ENCODE measurements at regions of chr6 and their contacts with region 1.

Region 1: GRCh38 chr6:87393022-87393622 is 14.7 kb upstream of the CFAP206 start:
- DNase-seq: peak; percentile 51 to 62 (median 59)
- H3K4me3 ChIP-seq: no peak overlapping the region
- H3K4me3 Mint-ChIP-seq: no peak overlapping the region
- H3K27ac ChIP-seq: no peak overlapping the region
- H3K27ac Mint-ChIP-seq: no peak overlapping the region
- H3K4me1 ChIP-seq: no peaks in the 10 kb centered on the region
- H3K4me1 Mint-ChIP-seq: peaks cover 0 to 2% (median 0%) of the 10 kb centered on the region in 4 donors
- H3K27me3 ChIP-seq: no peaks in the 10 kb centered on the region
- H3K27me3 Mint-ChIP-seq: no peaks in the 10 kb centered on the region

Region 2: GRCh38 chr6:87407901-87408720 is 15.0 kb after region 1 on chr6 and contains the start of gene CFAP206:
- CTCF ChIA-PET with region 1: interaction called, 14 read pairs
- POLR2A ChIA-PET with region 1: no interaction called
- intact Hi-C with region 1: no loop called
- DNase-seq: peak; percentile 79 to 88 (median 85)
- H3K4me3 ChIP-seq: peak within 1 kb of the TSS; percentile 75 to 84
- H3K4me3 Mint-ChIP-seq: peak within 1 kb of the TSS; percentile 88 to 96 (median 89)
- H3K27ac ChIP-seq: peak within 1 kb of the TSS; percentile 67
- H3K27ac Mint-ChIP-seq: peak within 1 kb of the TSS; percentile 83 to 93 (median 89)
- H3K4me1 ChIP-seq: peaks cover 11% of the 10 kb centered on the region
- H3K4me1 Mint-ChIP-seq: peaks cover 4 to 13% (median 5%) of the 10 kb centered on the region in 4 donors
- H3K27me3 ChIP-seq: no peaks in the 10 kb centered on the region
- H3K27me3 Mint-ChIP-seq: peaks cover 4 to 10% of the 10 kb centered on the region in 2 donors
- total RNA-seq, gene CFAP206: 0.25 TPM in 1 of 2 experiments, not detected in the other

Region 3: DNA sequence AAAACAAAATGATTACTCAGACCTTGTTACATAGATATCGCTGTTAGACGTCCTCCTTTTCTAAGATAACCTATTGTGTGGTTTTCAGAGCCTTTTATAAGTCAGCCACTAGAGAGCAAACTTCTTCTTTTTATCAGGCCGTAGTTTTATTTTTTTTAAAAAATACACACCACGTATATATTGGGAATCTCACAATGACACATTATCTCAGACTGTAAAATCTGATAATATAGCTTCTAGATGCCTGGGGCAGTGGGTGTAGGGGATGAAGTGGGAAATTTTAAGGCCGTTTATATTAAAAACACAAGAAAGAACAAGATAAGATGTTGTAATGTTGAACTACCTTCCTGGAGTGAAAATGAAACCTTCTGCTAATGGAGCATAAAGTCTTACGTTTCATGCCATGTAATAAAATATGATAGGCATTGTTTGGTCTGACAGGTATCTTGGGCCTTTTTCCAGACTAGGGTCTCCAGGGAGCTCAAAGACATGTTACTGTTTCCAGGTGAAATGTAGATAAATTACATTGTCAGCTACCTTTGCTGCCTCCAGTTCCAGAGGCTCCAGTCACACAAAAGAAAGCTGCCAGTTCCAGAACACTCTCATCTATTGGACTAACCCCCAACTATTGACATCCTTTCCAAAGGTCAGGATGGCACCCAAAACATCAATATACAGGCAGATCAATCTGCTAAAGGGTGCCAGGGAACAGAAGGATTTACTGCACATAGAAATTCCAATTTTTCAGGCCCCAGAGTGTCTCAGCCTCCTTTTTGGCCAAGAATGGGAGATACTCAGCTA is 439.1 kb after region 1 on chr6:
- CTCF ChIA-PET with region 1: interaction called, 13 read pairs
- POLR2A ChIA-PET with region 1: no interaction called
- intact Hi-C with region 1: no loop called
- DNase-seq: peak in 4 of 5 donors; percentile 37 to 51 (median 44)
- H3K4me3 ChIP-seq: peak overlapping the region in 1 of 2 donors; percentile 46
- H3K4me3 Mint-ChIP-seq: peak overlapping the region; percentile 81 to 95 (median 90)
- H3K27ac ChIP-seq: peak overlapping the region; percentile 44
- H3K27ac Mint-ChIP-seq: peak overlapping the region; percentile 19 to 97 (median 95)
- H3K4me1 ChIP-seq: peaks cover 6% of the 10 kb centered on the region
- H3K4me1 Mint-ChIP-seq: peaks cover 0 to 6% (median 5%) of the 10 kb centered on the region in 4 donors
- H3K27me3 ChIP-seq: no peaks in the 10 kb centered on the region
- H3K27me3 Mint-ChIP-seq: no peaks in the 10 kb centered on the region

Region 4: GRCh38 chr6:88780714-88781389 is 1387.7 kb after region 1 on chr6:
- CTCF ChIA-PET with region 1: interaction called, 24 read pairs
- POLR2A ChIA-PET with region 1: no interaction called
- intact Hi-C with region 1: loop called (anchors 1 kb)
- DNase-seq: peak; percentile 51 to 63 (median 54)
- H3K4me3 ChIP-seq: no peak overlapping the region
- H3K4me3 Mint-ChIP-seq: no peak overlapping the region
- H3K27ac ChIP-seq: no peak overlapping the region
- H3K27ac Mint-ChIP-seq: no peak overlapping the region
- H3K4me1 ChIP-seq: no peaks in the 10 kb centered on the region
- H3K4me1 Mint-ChIP-seq: peaks cover 0 to 5% (median 4%) of the 10 kb centered on the region in 4 donors
- H3K27me3 ChIP-seq: no peaks in the 10 kb centered on the region
- H3K27me3 Mint-ChIP-seq: no peaks in the 10 kb centered on the region

Measured in CD4-positive, alpha-beta memory T cell (primary cell).